H1 (cell line): ENCODE measurements at regions of chr5 and their contacts with region 1.

Region 1: GRCh38 chr5:172939071-172939470 is 20.2 kb upstream of the RPL26L1 start:
- DNase-seq: peak in 1 of 2 experiments; percentile 65
- H3K4me3 ChIP-seq: no peak overlapping the region
- H3K27ac ChIP-seq: no peak overlapping the region; the same call in 1 of the 2 replicates
- H3K4me1 ChIP-seq: peaks cover 4 to 15% (median 9%) of the 10 kb centered on the region in 4 experiments; a peak in 5 of 7 replicates
- H3K27me3 ChIP-seq: no peaks in the 10 kb centered on the region
- CTCF ChIP-seq: peak; percentile 82 to 93 (median 83)
- EP300 ChIP-seq: no peak
- POLR2A ChIP-seq: no peak
- RAD21 ChIP-seq: peak; percentile 38 to 53

Region 2: DNA sequence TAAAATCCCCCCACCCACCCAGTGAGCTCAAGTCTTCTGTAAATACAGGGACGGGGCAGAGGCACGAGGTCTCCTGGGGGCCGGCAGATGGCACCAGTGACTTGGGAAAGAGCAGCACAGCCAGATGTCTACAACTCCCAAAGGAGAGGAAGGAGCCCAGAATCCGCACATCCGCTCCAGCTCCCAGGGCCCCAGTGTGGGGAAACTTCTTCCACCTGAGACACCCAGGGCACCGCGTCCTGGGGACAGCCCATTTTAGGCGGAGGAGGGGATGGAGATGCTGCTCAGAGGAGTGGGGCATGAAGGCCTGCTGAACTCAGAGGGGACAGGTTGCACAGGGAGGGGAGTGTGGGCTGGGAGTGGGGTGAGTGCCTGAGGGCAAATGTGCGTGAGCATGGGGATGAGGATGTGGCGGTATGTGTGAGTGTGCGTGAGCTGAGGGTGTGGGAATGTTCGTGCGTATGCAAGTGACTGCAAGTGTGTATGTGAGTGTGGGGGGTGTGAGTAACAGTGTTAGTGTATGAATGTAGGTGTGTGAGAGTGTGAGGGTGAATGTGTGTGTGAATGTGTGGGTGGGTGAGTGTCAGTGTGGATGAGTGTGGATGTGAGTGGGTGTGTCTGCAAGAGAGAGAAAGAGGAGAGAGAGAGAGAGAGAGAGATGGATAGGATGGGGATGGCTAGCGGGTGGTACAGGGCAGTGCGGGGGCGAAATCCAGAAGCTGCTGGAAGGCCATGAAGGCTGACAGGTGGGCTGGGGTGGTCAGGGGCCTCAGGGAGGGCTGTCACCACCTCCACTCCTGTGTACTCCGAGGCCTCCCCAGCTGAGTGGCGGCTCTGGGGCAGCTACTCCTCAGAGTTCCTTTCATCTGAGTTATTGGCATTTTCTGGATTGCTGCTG is 231.5 kb before region 1 on chr5:
- CTCF ChIA-PET with region 1: interaction called, 206 read pairs
- POLR2A ChIA-PET with region 1: no interaction called
- DNase-seq: peak in 1 of 2 experiments; percentile 71
- H3K4me3 ChIP-seq: no peak overlapping the region
- H3K27ac ChIP-seq: no peak overlapping the region
- H3K4me1 ChIP-seq: peaks cover 0 to 3% (median 0%) of the 10 kb centered on the region in 4 experiments; a peak in 1 of 7 replicates
- H3K27me3 ChIP-seq: peaks cover 0 to 3% (median 0%) of the 10 kb centered on the region in 4 experiments; a peak in 3 of 7 replicates
- CTCF ChIP-seq: peak in 2 of 3 experiments; percentile 58 to 63; a peak in 3 of 4 replicates
- EP300 ChIP-seq: no peak
- POLR2A ChIP-seq: no peak
- RAD21 ChIP-seq: peak; percentile 82 to 88

Region 3: GRCh38 chr5:172904643-172905347 is 34.3 kb before region 1 on chr5:
- CTCF ChIA-PET with region 1: interaction called, 22 read pairs
- POLR2A ChIA-PET with region 1: no interaction called
- DNase-seq: no peak
- H3K4me3 ChIP-seq: no peak overlapping the region
- H3K27ac ChIP-seq: no peak overlapping the region
- H3K4me1 ChIP-seq: peaks cover 0 to 9% (median 4%) of the 10 kb centered on the region in 4 experiments; a peak in 5 of 7 replicates
- H3K27me3 ChIP-seq: no peaks in the 10 kb centered on the region
- CTCF ChIP-seq: no peak
- EP300 ChIP-seq: no peak
- POLR2A ChIP-seq: no peak
- RAD21 ChIP-seq: no peak

Region 4: GRCh38 chr5:172951791-172952511 is 12.9 kb after region 1 on chr5:
- CTCF ChIA-PET with region 1: interaction called, 24 read pairs
- POLR2A ChIA-PET with region 1: interaction called, 7 read pairs
- DNase-seq: no peak
- H3K4me3 ChIP-seq: no peak overlapping the region
- H3K27ac ChIP-seq: no peak overlapping the region
- H3K4me1 ChIP-seq: no peaks in the 10 kb centered on the region
- H3K27me3 ChIP-seq: peaks cover 0 to 2% (median under 1%) of the 10 kb centered on the region in 4 experiments; a peak in 3 of 7 replicates
- CTCF ChIP-seq: no peak
- EP300 ChIP-seq: no peak
- POLR2A ChIP-seq: no peak
- RAD21 ChIP-seq: no peak